Activated naive CD4-positive, alpha-beta T cell treated with anti-CD3 and anti-CD28 coated beads for 36 hours (primary cell): ENCODE measurements at regions of chr6 and their contacts with region 1.

Region 1: GRCh38 chr6:3929281-3929798 is 80.2 kb downstream of the FAM50B start:
- DNase-seq: no peak
- H3K4me3 Mint-ChIP-seq: no peak overlapping the region
- H3K27ac Mint-ChIP-seq: no peak overlapping the region
- H3K4me1 Mint-ChIP-seq: no peaks in the 10 kb centered on the region
- H3K27me3 Mint-ChIP-seq: no peaks in the 10 kb centered on the region

Region 2: DNA sequence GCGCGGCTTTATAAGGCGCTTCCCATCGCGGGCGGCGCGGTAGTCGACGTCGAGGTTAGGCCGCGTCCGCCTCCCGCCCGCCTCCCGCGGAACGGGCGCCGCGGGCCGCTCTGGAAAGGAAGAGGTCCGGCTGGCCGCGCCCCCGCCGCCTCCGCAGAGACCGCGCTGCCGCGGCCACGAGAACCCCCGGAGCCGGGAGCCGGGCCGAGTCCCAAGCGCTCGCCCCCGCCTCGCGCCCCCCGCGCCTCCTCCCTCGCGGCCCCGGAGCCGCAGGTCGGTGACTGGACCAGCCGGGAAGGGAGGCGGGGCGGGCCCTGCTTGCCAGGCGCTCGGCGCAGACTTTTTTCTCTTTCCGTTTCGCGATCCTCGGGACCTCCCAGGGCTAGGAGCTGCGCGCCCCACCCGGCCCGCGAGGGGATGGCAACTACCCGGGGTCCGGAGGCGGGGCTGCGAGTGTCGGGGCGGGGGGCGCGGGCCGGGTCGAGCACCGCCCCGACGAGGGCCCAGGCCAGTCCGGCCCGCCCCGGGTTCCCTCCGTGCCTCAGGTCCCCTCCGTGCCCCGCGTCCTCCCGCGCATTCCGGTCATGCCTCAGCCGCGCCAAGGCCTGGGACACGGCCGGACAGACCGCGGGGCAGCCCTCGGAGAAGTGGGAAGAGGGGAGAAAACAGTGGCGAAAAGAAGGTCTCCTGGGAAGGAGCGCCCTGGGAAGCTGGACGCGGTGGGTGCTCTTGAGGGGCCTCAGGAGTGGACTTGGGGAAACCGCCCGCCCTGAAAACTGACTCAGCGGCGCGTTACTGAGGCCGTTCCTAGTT is 177.4 kb before region 1 on chr6:
- CTCF ChIA-PET with region 1: interaction called, 14 read pairs
- intact Hi-C with region 1: loop called (anchors 1 kb)
- DNase-seq: peak; percentile 76
- H3K4me3 Mint-ChIP-seq: peak overlapping the region; percentile 43
- H3K27ac Mint-ChIP-seq: no peak overlapping the region
- H3K4me1 Mint-ChIP-seq: no peaks in the 10 kb centered on the region
- H3K27me3 Mint-ChIP-seq: peaks cover 33% of the 10 kb centered on the region

Region 3: GRCh38 chr6:3876101-3876500 is 53.2 kb before region 1 on chr6:
- CTCF ChIA-PET with region 1: no interaction called
- intact Hi-C with region 1: no loop called
- DNase-seq: no peak
- H3K4me3 Mint-ChIP-seq: no peak overlapping the region
- H3K27ac Mint-ChIP-seq: no peak overlapping the region
- H3K4me1 Mint-ChIP-seq: no peaks in the 10 kb centered on the region
- H3K27me3 Mint-ChIP-seq: peaks cover 2% of the 10 kb centered on the region

Region 4: GRCh38 chr6:3887150-3887700 is 42.1 kb before region 1 on chr6:
- CTCF ChIA-PET with region 1: no interaction called
- intact Hi-C with region 1: loop called (anchors 5 kb)
- DNase-seq: peak; percentile 14
- H3K4me3 Mint-ChIP-seq: no peak overlapping the region
- H3K27ac Mint-ChIP-seq: no peak overlapping the region
- H3K4me1 Mint-ChIP-seq: no peaks in the 10 kb centered on the region
- H3K27me3 Mint-ChIP-seq: no peaks in the 10 kb centered on the region